ENCODE measurements at regions of chr11 and their contacts with region 1.

Region 1: DNA sequence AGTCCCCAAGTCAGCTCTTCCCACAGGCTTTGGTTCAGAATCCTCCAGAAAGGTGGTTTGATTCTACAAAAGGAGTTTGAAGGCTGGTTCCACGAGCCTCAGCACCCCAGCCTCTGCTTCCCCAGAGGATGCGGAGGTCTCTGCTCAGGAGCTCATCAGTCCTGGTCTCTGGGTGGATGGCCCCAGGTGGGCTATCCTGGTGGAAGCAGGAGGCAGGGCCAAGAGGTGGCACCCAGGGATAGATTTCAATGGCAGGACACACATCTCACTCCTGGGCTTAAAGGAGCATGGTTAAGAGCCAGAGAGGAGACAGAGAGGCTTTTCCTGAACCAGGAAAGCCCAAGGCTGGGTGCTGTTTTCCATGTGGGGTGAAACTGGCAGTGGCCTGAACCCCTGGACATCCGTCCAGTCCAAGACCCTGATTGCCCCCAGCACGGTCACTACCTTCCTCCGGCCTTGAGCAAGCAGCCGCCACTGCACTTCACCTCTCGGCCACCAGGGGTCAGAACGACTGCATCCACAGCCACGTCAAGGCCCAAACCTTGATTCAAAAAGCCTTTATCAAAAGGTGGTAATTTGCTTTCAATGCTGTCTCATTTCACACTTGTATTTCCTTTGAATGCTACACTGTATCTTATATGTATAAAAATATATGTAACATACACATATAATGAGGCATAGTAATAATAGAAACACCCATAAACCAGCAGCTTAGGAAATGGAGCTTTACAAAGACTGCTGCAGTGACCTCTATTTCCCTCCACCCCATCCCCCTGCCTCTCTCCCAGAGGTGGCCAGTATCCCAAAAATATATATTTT is 19.3 kb upstream of the FXYD2 start:
- DNase-seq: no peak
- ATAC-seq: peak; percentile 89
- H3K4me3 ChIP-seq: no peak overlapping the region
- H3K27ac ChIP-seq: no peak overlapping the region
- H3K4me1 ChIP-seq: no peaks in the 10 kb centered on the region; the same call in 1 of the 2 replicates
- H3K27me3 ChIP-seq: no peaks in the 10 kb centered on the region
- CTCF ChIP-seq: peak; percentile 94 to 98 (median 97)
- EP300 ChIP-seq: no peak
- POLR2A ChIP-seq: no peak
- RAD21 ChIP-seq: peak; percentile 87

Region 2: DNA sequence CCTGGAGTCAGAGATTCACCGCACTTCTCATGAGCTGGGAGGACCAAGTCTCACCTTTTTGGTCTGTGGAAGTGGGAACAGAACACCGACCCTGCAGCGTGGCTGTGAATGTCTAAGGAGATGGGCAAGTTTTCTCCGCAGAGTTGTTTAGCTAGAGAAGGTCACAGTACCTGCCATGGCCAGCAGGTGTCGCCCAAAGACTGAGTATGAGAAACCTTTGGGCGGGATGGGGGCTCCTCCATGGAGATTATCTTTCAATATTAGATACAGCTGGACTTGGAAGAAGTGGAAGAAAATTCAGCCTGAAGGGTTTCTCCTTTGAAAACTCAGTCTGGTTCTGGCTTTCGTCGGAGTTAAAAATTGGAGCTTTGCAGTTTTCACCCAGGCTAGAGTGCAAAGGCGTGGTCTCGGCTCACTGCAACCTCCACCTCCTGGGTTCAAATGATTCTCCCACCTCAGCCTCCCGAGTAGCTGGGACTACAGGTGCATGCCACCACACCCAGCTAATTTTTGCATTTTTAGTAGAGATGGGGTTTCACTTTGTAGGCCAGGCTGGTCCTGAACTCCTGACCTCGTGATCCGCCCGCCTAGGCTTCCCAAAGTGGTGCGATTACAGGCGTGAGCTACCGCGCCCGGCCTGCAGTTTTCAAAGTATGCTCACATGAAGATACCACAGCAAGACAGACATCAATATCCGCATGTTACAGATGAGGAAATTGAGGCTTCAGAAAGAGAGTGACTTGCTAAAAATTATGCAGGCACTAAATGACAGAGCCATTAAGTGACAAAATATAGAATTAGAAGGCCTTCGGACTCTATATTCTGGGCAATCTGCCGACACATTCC is 36.2 kb before region 1 on chr11:
- CTCF ChIA-PET with region 1: interaction called, 33 read pairs
- POLR2A ChIA-PET with region 1: no interaction called
- RAD21 ChIA-PET with region 1: interaction called, 4 read pairs
- SMC1A ChIA-PET with region 1: interaction called, 12 read pairs
- in situ Hi-C with region 1: no loop called
- intact Hi-C with region 1: no loop called
- DNase-seq: no peak
- ATAC-seq: peak; percentile 85
- H3K4me3 ChIP-seq: no peak overlapping the region
- H3K27ac ChIP-seq: no peak overlapping the region
- H3K4me1 ChIP-seq: peaks cover 17% of the 10 kb centered on the region
- H3K27me3 ChIP-seq: no peaks in the 10 kb centered on the region
- CTCF ChIP-seq: peak; percentile 86 to 91 (median 89)
- EP300 ChIP-seq: no peak
- POLR2A ChIP-seq: no peak
- RAD21 ChIP-seq: peak; percentile 95

Region 3: GRCh38 chr11:117900121-117900648 is 56.3 kb after region 1 on chr11:
- CTCF ChIA-PET with region 1: interaction called, 32 read pairs
- POLR2A ChIA-PET with region 1: no interaction called
- RAD21 ChIA-PET with region 1: interaction called, 10 read pairs
- SMC1A ChIA-PET with region 1: interaction called, 29 read pairs
- in situ Hi-C with region 1: no loop called
- intact Hi-C with region 1: no loop called
- DNase-seq: peak; percentile 60
- ATAC-seq: peak; percentile 93
- H3K4me3 ChIP-seq: no peak overlapping the region
- H3K27ac ChIP-seq: no peak overlapping the region
- H3K4me1 ChIP-seq: peaks cover 4% of the 10 kb centered on the region
- H3K27me3 ChIP-seq: no peaks in the 10 kb centered on the region
- CTCF ChIP-seq: no peak
- EP300 ChIP-seq: no peak
- POLR2A ChIP-seq: no peak
- RAD21 ChIP-seq: no peak

Region 4: GRCh38 chr11:117953024-117953671 is 109.3 kb after region 1 on chr11:
- CTCF ChIA-PET with region 1: interaction called, 238 read pairs
- POLR2A ChIA-PET with region 1: no interaction called
- RAD21 ChIA-PET with region 1: interaction called, 135 read pairs
- SMC1A ChIA-PET with region 1: interaction called, 163 read pairs
- in situ Hi-C with region 1: loop called (anchors 5 kb)
- intact Hi-C with region 1: no loop called
- DNase-seq: no peak
- ATAC-seq: peak; percentile 30; the same call in 1 of the 3 replicates
- H3K4me3 ChIP-seq: no peak overlapping the region
- H3K27ac ChIP-seq: no peak overlapping the region
- H3K4me1 ChIP-seq: peaks cover 18% of the 10 kb centered on the region
- H3K27me3 ChIP-seq: no peaks in the 10 kb centered on the region
- CTCF ChIP-seq: no peak
- EP300 ChIP-seq: no peak
- POLR2A ChIP-seq: no peak
- RAD21 ChIP-seq: no peak

Region 5: GRCh38 chr11:118046051-118046963 is 202.4 kb after region 1 on chr11:
- CTCF ChIA-PET with region 1: interaction called, 127 read pairs
- POLR2A ChIA-PET with region 1: no interaction called
- RAD21 ChIA-PET with region 1: interaction called, 93 read pairs
- SMC1A ChIA-PET with region 1: interaction called, 95 read pairs
- in situ Hi-C with region 1: no loop called
- intact Hi-C with region 1: no loop called
- DNase-seq: peak; percentile 44
- ATAC-seq: peak; percentile 88
- H3K4me3 ChIP-seq: no peak overlapping the region
- H3K27ac ChIP-seq: no peak overlapping the region
- H3K4me1 ChIP-seq: peaks cover 20% of the 10 kb centered on the region
- H3K27me3 ChIP-seq: no peaks in the 10 kb centered on the region
- CTCF ChIP-seq: no peak
- EP300 ChIP-seq: no peak
- POLR2A ChIP-seq: no peak
- RAD21 ChIP-seq: no peak

Region 6: GRCh38 chr11:118164885-118165284 is 321.0 kb after region 1 on chr11:
- CTCF ChIA-PET with region 1: no interaction called
- POLR2A ChIA-PET with region 1: no interaction called
- RAD21 ChIA-PET with region 1: no interaction called
- SMC1A ChIA-PET with region 1: no interaction called
- in situ Hi-C with region 1: no loop called
- intact Hi-C with region 1: no loop called
- DNase-seq: no peak
- ATAC-seq: no peak
- H3K4me3 ChIP-seq: no peak overlapping the region
- H3K27ac ChIP-seq: no peak overlapping the region
- H3K4me1 ChIP-seq: no peaks in the 10 kb centered on the region
- H3K27me3 ChIP-seq: peaks cover 1 to 3% of the 10 kb centered on the region in 2 experiments; a peak in 3 of 4 replicates
- CTCF ChIP-seq: no peak
- EP300 ChIP-seq: no peak
- POLR2A ChIP-seq: no peak
- RAD21 ChIP-seq: no peak

Measured in GM12878 (cell line).